Activated CD8-positive, alpha-beta T cell treated with anti-CD3 and anti-CD28 coated beads for 36 hours (primary cell): ENCODE measurements at regions of chr17 and their contacts with region 1.

Region 1: GRCh38 chr17:2786176-2786881 is 9.9 kb upstream of the RAP1GAP2 start:
- DNase-seq: peak; percentile 94
- ATAC-seq: peak; percentile 100
- H3K4me3 Mint-ChIP-seq: no peak overlapping the region
- H3K27ac Mint-ChIP-seq: no peak overlapping the region
- H3K4me1 Mint-ChIP-seq: peaks cover 3% of the 10 kb centered on the region
- H3K27me3 Mint-ChIP-seq: peaks cover 11% of the 10 kb centered on the region
- CTCF ChIP-seq: peak; percentile 93

Region 2: DNA sequence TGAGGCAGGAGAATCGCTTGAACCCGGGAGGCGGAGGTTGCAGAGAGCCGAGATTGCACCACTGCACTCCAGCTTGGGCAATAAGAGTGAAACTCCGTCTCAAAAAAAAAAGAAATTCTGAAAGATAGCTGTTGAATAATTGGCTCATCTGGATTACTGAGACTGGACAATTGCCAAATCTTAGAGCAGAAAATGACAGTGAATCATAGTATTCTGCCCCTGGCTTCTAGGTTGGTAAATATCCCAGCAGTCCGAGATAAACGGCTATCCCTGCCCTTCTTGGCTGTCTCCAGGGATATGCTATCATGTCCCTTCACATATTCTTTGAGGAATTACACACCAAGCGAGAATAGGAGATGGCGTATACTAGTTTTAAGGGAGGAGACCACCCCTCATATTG is 239.2 kb before region 1 on chr17:
- CTCF ChIA-PET with region 1: no interaction called
- POLR2A ChIA-PET with region 1: no interaction called
- intact Hi-C with region 1: no loop called
- DNase-seq: no peak
- ATAC-seq: no peak
- H3K4me3 Mint-ChIP-seq: no peak overlapping the region
- H3K27ac Mint-ChIP-seq: no peak overlapping the region
- H3K4me1 Mint-ChIP-seq: peaks cover 9% of the 10 kb centered on the region
- H3K27me3 Mint-ChIP-seq: peaks cover 4% of the 10 kb centered on the region
- CTCF ChIP-seq: no peak

Region 3: GRCh38 chr17:2755891-2756724 is 30.2 kb before region 1 on chr17:
- CTCF ChIA-PET with region 1: interaction called, 10 read pairs
- POLR2A ChIA-PET with region 1: interaction called, 3 read pairs
- intact Hi-C with region 1: no loop called
- DNase-seq: no peak
- ATAC-seq: no peak
- H3K4me3 Mint-ChIP-seq: no peak overlapping the region
- H3K27ac Mint-ChIP-seq: no peak overlapping the region
- H3K4me1 Mint-ChIP-seq: no peaks in the 10 kb centered on the region
- H3K27me3 Mint-ChIP-seq: peaks cover 53% of the 10 kb centered on the region
- CTCF ChIP-seq: no peak

Region 4: GRCh38 chr17:2796164-2797125 is 10.1 kb after region 1 on chr17 and contains the start of gene RAP1GAP2:
- CTCF ChIA-PET with region 1: interaction called, 14 read pairs
- POLR2A ChIA-PET with region 1: no interaction called
- intact Hi-C with region 1: no loop called
- DNase-seq: peak; percentile 69
- ATAC-seq: peak; percentile 81
- H3K4me3 Mint-ChIP-seq: peak within 1 kb of the TSS; percentile 5
- H3K27ac Mint-ChIP-seq: no peak within 1 kb of the TSS
- H3K4me1 Mint-ChIP-seq: peaks cover 63% of the 10 kb centered on the region
- H3K27me3 Mint-ChIP-seq: peaks cover 48% of the 10 kb centered on the region
- CTCF ChIP-seq: no peak
- total RNA-seq, gene RAP1GAP2: 0.31 to 0.50 TPM

Region 5: DNA sequence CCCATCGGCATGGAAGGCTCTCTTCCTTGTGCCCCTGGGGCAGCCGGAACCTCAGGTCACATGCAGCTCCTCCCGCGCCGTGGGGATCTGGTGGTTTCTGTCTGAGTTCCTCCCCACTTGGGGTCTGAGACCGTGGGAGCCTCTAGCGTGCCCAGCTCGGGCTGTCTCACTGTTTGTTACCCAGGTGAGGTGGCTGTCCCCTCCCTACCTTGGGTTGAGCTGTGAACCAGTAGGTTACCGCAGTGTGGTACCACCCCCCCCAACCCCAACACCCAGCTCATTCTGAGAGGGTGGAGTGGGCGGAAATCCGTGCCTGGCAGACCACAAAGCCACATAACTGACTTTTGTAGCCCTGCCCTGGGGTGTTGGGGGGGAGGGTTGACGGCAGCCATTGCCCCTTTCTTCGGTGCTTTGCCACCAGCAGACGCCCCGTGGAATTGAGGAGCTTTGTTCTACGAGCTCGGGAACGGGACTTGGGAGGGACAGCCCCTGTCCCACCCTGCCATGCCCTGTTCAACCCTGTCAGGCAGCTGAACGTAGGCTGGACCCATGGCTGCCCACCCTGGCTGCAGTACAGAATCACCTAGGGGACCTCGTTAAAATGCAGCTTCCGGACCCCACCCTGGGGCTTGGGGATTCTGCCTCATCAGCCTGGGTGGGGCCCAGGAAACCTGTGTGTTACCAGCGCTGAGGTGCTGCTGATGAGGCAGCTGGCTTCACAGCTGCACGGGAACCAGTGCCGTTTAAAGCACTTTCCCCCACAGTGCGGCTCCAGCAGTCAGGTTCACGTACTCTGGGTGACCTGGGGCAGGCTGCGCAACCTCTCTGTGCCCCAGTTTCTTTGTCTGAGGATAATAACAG is 28.4 kb after region 1 on chr17:
- CTCF ChIA-PET with region 1: interaction called, 20 read pairs
- POLR2A ChIA-PET with region 1: interaction called, 12 read pairs
- intact Hi-C with region 1: no loop called
- DNase-seq: peak; percentile 93
- ATAC-seq: peak; percentile 79
- H3K4me3 Mint-ChIP-seq: peak overlapping the region; percentile 37
- H3K27ac Mint-ChIP-seq: no peak overlapping the region
- H3K4me1 Mint-ChIP-seq: peaks cover 16% of the 10 kb centered on the region
- H3K27me3 Mint-ChIP-seq: peaks cover 22% of the 10 kb centered on the region
- CTCF ChIP-seq: no peak

Region 6: GRCh38 chr17:2837147-2837561 is 50.8 kb after region 1 on chr17:
- CTCF ChIA-PET with region 1: interaction called, 25 read pairs
- POLR2A ChIA-PET with region 1: no interaction called
- intact Hi-C with region 1: loop called (anchors 10 kb)
- DNase-seq: peak; percentile 72
- ATAC-seq: peak; percentile 99
- H3K4me3 Mint-ChIP-seq: no peak overlapping the region
- H3K27ac Mint-ChIP-seq: no peak overlapping the region
- H3K4me1 Mint-ChIP-seq: peaks cover 7% of the 10 kb centered on the region
- H3K27me3 Mint-ChIP-seq: peaks cover 2% of the 10 kb centered on the region
- CTCF ChIP-seq: peak; percentile 47

Region 7: GRCh38 chr17:2847381-2848333 is 61.3 kb after region 1 on chr17:
- CTCF ChIA-PET with region 1: interaction called, 11 read pairs
- POLR2A ChIA-PET with region 1: no interaction called
- intact Hi-C with region 1: no loop called
- DNase-seq: no peak
- ATAC-seq: no peak
- H3K4me3 Mint-ChIP-seq: no peak overlapping the region
- H3K27ac Mint-ChIP-seq: no peak overlapping the region
- H3K4me1 Mint-ChIP-seq: peaks cover 10% of the 10 kb centered on the region
- H3K27me3 Mint-ChIP-seq: peaks cover 16% of the 10 kb centered on the region
- CTCF ChIP-seq: no peak

Region 8: GRCh38 chr17:3012926-3013581 is 226.7 kb after region 1 on chr17:
- CTCF ChIA-PET with region 1: interaction called, 11 read pairs
- POLR2A ChIA-PET with region 1: no interaction called
- intact Hi-C with region 1: no loop called
- DNase-seq: peak; percentile 69
- ATAC-seq: peak; percentile 94
- H3K4me3 Mint-ChIP-seq: no peak overlapping the region
- H3K27ac Mint-ChIP-seq: no peak overlapping the region
- H3K4me1 Mint-ChIP-seq: no peaks in the 10 kb centered on the region
- H3K27me3 Mint-ChIP-seq: no peaks in the 10 kb centered on the region
- CTCF ChIP-seq: peak; percentile 68